ENCODE measurements at regions of chr11 and their contacts with region 1.

Region 1: DNA sequence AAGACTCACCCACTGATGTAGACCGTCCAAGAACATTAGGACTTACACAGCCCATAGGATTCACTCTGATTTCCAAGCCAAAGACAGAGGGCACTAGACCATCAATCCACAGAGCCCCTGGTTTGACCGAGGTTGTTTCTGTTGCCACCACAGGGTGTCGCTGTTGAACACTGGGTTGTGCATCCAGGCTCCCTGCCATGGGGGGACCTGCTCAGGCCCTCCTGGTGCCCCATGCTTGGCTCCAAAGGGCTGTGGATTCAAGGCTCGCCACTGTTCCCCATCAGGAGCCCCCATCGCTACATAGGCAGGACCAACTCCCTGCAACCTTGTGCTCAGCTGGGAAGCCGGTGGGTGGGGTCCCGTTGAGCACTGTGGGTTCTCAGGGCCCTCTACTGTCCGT is 128.0 kb upstream of the ANO1 start:
- DNase-seq: peak; percentile 81 to 88 (median 86)
- ATAC-seq: peak; percentile 83
- H3K4me3 ChIP-seq: no peak overlapping the region
- H3K27ac ChIP-seq: peak overlapping the region; percentile 13; the same call in 1 of the 3 replicates
- H3K4me1 ChIP-seq: peaks cover 42 to 68% of the 10 kb centered on the region in 2 experiments
- H3K27me3 ChIP-seq: no peaks in the 10 kb centered on the region
- CTCF ChIP-seq: peak; percentile 97 to 99 (median 99)
- EP300 ChIP-seq: no peak
- POLR2A ChIP-seq: no peak
- RAD21 ChIP-seq: peak; percentile 66 to 95

Region 2: DNA sequence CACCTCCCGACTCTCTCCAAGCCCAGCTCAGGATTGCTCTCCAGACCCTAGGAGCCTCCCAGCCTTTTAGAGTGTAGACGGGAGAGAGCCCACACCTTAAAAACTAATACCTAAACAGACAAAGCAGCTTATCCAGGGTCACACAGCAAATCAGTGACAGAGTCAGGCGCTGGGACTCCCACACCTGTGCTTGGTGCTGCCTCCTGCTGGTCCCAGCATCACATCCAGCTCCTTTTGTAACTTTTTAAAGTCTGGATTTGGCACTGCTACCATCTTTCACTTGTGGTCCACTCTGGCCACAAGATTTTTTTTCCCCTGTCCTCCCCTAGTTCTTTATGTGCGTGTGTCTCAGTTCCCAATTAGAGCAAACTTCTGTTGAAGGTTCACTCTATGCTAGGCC is 132.7 kb after region 1 on chr11:
- CTCF ChIA-PET with region 1: interaction called, 6 read pairs
- POLR2A ChIA-PET with region 1: no interaction called
- in situ Hi-C with region 1: no loop called
- intact Hi-C with region 1: loop called (anchors 2 kb)
- DNase-seq: peak in 3 of 4 experiments; percentile 32 to 41 (median 37)
- ATAC-seq: peak; percentile 51; the same call in 2 of the 3 replicates
- H3K4me3 ChIP-seq: no peak overlapping the region
- H3K27ac ChIP-seq: no peak overlapping the region
- H3K4me1 ChIP-seq: peaks cover 0 to 17% of the 10 kb centered on the region in 2 experiments; a peak in 1 of 5 replicates
- H3K27me3 ChIP-seq: peaks cover 11 to 68% of the 10 kb centered on the region in 2 experiments
- CTCF ChIP-seq: peak; percentile 55 to 69 (median 69)
- EP300 ChIP-seq: no peak
- POLR2A ChIP-seq: no peak
- RAD21 ChIP-seq: peak; percentile 9 to 62; a peak in 2 of 4 replicates

Measured in K562 (cell line).